BJ (cell line): ENCODE measurements at regions of chr20 and their contacts with region 1.

Region 1: DNA sequence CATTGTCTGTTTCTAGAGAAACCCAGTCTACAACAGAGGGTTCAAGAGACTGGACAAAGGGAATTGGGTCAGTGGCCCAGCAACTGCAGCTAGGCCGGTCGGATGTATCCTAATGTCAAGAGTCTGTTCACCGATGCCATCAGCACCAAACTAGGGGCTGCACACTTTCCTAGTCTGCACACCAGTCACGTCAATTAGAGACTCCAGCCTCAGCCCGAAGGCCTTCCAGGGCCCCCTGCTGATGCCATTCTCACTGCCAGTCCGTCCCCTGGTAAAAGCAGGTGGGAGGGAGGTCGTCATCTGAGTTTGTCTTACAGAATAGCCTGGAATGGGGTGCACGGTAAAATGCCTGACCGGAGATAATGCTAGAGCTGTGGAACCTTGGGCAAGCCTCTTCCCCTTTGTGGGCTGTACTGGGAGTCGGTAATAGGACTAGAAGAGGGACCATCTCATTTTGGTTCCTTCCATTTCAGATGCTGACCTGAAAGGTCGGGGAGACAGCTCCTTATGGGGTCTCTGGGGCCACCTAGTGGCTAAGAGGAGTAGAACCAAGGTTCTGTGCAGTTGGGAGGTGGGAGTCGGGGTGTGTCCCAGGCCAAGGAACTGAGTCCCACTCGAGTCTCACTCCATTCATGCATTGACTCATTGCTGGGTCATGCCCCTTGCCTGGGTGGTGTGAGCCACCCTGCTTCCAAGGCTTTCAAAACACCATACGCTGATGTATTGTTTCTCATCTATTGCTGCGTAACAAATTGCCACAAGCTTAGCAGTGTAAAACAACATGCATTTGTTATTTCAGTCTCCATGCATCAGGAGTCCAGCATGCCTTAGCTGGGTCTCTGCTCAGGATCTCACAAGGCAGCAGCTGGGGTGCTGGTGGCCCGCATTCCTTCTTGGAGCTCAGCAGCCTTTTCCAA is 5.1 kb downstream of the SOX12 start:
- DNase-seq: no peak
- H3K4me3 ChIP-seq: no peak overlapping the region
- H3K27me3 ChIP-seq: no peaks in the 10 kb centered on the region
- CTCF ChIP-seq: peak; percentile 89

Region 2: DNA sequence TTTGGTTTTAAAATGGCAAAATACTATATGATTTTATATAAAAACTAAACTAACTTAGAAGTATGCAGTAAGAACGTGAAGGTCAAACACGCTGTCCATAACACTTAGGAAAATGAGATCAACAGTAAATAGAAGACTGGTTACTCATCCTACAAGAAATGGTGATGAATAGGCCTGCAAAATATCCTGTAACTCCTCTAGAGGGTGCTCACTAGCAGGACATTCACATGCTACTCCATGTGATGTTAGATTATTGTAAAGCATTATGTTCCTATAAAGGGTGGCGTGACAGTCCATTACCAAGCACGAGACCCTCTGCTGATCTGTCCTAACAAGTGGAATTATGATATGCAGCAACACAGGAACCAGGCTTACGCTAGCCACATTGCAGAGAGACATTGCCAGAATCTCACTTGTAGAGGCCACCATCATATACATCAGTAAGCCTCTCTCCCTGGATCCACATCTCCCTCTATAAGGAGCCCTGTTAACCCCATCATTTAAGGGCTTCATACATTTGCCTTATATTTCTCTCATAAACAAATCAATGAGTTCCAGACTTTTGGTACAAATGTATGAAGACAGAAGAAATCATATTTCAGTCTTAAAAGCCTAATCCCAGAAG is 121.4 kb before region 1 on chr20:
- CTCF ChIA-PET with region 1: interaction called, 13 read pairs
- POLR2A ChIA-PET with region 1: no interaction called
- DNase-seq: peak; percentile 11
- H3K4me3 ChIP-seq: no peak overlapping the region
- H3K27me3 ChIP-seq: no peaks in the 10 kb centered on the region; the same call in 1 of the 2 replicates
- CTCF ChIP-seq: peak; percentile 70

Region 3: GRCh38 chr20:258963-259362 is 71.5 kb before region 1 on chr20:
- CTCF ChIA-PET with region 1: interaction called, 23 read pairs
- POLR2A ChIA-PET with region 1: no interaction called
- DNase-seq: no peak
- H3K4me3 ChIP-seq: no peak overlapping the region
- H3K27me3 ChIP-seq: peaks cover 5% of the 10 kb centered on the region
- CTCF ChIP-seq: peak; percentile 36; the same call in 1 of the 2 replicates

Region 4: GRCh38 chr20:266596-267562 is 63.6 kb before region 1 on chr20:
- CTCF ChIA-PET with region 1: interaction called, 15 read pairs
- POLR2A ChIA-PET with region 1: interaction called, 23 read pairs
- DNase-seq: no peak
- H3K4me3 ChIP-seq: peak overlapping the region; percentile 39
- H3K27me3 ChIP-seq: peaks cover 3% of the 10 kb centered on the region; the same call in 1 of the 2 replicates
- CTCF ChIP-seq: peak; percentile 98

Region 5: DNA sequence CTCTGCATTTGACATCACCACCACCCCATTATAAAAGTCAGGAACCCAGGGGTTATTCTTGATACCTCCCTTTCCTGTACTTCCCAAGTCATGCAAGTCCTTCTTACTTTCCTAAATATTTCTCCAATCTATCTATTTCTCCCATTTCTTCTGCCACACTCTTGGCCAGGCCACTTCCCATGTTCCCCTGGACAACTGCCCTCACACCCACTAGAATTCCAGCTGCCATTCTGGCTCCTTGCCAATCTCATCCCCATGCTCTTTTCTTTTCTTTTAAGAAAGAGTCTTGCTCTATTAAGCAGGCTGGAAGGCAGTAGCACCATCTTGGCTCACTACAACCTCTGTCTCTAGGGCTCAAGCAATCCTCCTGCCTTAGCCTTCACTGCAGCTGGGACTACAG is 57.8 kb before region 1 on chr20:
- CTCF ChIA-PET with region 1: interaction called, 10 read pairs
- POLR2A ChIA-PET with region 1: no interaction called
- DNase-seq: no peak
- H3K4me3 ChIP-seq: no peak overlapping the region
- H3K27me3 ChIP-seq: no peaks in the 10 kb centered on the region
- CTCF ChIP-seq: no peak

Region 6: GRCh38 chr20:341682-342081 is 11.2 kb after region 1 on chr20:
- CTCF ChIA-PET with region 1: interaction called, 25 read pairs
- POLR2A ChIA-PET with region 1: no interaction called
- DNase-seq: no peak
- H3K4me3 ChIP-seq: no peak overlapping the region
- H3K27me3 ChIP-seq: no peaks in the 10 kb centered on the region
- CTCF ChIP-seq: no peak

Region 7: DNA sequence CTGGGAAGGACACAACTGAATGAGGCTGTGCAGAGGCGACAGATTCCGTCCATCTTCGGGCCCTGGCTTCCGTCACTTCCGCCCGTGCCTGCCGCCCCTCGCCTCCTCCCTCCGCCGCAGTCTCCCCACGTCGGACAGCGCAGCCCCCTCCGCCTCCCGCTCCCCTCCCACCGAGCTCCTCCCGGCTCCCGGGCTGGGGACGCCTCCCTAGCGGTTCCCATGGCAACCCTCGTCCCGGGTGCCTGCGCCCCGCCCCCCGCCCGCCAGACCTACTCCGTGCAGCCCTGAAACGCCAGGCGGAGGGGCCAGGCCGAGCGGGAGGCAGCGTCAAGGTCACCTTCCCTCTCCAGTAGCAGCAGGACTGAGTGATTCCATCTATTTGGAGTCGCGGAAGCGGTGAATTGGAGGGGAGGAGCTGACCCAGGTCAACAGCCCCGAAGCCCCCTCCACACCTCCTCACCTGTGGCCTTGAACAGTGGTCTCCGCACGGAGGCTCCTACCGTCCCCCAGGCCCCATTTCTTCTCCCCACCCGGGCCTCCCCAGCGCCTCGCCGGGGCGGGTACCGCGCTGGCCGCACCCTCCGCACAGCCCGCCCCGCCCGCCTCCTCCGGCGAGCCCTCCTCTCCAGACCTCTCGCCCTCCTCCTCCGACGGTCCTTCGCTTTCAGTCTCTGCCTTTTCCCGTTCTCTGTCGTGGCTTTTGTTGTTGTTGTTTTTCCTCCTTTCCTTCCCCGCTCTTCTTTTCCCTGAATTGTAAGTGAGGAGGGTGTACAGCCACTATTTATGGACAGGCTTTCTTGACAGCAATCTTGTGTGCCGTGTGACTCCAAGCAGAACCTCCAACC is 17.4 kb after region 1 on chr20:
- CTCF ChIA-PET with region 1: interaction called, 24 read pairs
- POLR2A ChIA-PET with region 1: no interaction called
- DNase-seq: no peak
- H3K4me3 ChIP-seq: peak overlapping the region; percentile 87
- H3K27me3 ChIP-seq: no peaks in the 10 kb centered on the region
- CTCF ChIP-seq: no peak

Region 8: DNA sequence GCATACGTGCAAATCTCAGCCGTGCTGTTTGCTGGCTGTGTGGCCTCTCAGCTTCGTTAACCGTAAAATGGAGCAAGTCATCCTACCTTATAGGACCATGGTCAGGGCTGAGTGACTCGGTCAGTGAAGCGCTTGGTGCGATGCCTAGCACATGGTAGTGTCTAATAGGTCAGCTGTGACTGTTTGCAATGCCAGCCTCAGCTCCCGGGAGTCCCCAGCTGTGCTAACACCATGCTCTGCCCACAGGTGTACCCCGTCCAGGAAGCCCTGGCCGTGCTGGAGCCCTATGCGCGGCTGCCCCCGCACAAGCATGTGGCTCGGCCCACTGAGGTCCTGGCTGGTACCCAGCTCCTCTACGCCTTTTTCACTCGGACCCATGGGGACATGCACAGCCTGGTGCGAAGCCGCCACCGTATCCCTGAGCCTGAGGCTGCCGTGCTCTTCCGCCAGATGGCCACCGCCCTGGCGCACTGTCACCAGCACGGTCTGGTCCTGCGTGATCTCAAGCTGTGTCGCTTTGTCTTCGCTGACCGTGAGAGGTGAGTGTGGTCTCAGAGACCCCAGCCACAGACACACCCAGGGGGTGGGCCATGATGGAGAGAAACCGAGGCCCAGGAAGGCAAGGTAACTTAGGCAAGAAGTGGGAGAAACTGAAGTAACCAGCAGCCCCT is 60.7 kb after region 1 on chr20:
- CTCF ChIA-PET with region 1: no interaction called
- POLR2A ChIA-PET with region 1: no interaction called
- DNase-seq: no peak
- H3K4me3 ChIP-seq: no peak overlapping the region
- H3K27me3 ChIP-seq: no peaks in the 10 kb centered on the region
- CTCF ChIP-seq: no peak